Caco-2 (cell line): ENCODE measurements at regions of chr6 and their contacts with region 1.

Region 1: DNA sequence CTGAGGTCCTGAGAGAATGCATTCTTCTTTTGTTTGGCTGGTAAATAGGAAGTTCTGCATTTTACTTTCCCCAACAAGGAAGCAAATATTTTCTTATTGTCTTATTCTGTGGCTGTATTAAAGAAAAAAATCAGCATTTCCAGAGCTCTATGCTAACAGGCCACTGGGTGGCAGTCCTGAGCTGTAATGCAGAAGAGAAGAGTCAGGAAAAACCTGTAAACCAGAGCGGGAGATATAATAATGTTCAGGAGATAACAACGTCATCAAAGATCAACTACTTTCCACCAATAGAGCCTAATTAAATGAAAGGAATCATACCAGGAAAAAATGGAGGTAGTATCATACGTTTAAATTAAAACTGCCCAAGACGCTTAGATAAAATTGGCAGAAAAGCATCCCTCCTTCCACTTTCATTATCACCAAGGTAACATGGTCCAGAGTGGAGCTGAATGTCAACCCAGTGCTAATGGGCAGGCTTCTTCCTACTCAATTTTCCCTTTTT is 55.6 kb upstream of the CARMIL1 start:
- DNase-seq: peak; percentile 43 to 68
- H3K4me3 ChIP-seq: no peak overlapping the region
- H3K4me3 Mint-ChIP-seq: peak overlapping the region; percentile 25
- H3K27ac Mint-ChIP-seq: no peak overlapping the region
- H3K4me1 ChIP-seq: no peaks in the 10 kb centered on the region
- H3K4me1 Mint-ChIP-seq: peaks cover 13% of the 10 kb centered on the region
- H3K27me3 ChIP-seq: no peaks in the 10 kb centered on the region
- H3K27me3 Mint-ChIP-seq: no peaks in the 10 kb centered on the region
- CTCF ChIP-seq: peak; percentile 57 to 83

Region 2: DNA sequence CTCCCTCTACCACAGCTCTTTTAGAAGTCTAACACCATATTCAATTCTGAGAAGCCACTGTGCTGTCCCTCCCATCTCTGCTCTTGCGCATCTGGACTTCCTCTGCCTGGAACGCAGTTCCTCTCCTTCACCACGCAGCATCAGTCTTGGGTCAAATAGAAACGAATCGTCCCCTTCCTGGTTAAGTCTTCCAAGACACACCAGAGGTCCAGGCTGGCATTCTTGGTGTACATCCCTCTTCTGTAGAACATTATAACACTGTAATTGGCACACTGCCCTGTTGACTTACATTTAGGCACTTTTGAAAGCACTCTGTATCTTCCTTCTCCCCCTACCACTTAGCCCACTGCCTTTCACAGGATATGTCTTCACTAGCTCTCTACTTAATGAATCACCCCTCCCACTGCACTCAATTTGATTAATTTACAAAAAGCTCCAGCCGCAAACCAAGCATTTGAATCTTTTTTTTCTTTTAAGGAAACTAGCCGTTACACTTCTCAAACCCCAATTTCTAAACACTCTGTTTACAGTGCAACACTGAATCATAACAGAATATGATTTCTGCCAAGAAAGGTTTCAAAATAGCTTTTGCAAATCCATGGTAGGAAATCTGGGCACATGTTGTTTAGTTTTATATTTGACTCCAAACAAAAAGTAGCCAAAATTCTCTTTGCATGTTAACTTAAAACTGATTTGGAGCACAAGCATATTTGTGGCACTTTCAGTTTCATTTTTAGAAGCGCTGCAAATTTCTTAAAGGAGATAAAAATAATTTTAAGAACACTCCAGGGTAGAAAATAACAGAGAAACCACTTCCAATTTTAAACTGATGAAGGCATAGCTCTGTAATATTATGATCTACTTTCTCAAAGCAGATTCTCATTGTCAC is 85.1 kb before region 1 on chr6:
- CTCF ChIA-PET with region 1: no interaction called
- POLR2A ChIA-PET with region 1: no interaction called
- intact Hi-C with region 1: no loop called
- DNase-seq: no peak
- H3K4me3 ChIP-seq: no peak overlapping the region
- H3K4me3 Mint-ChIP-seq: no peak overlapping the region
- H3K27ac Mint-ChIP-seq: no peak overlapping the region
- H3K4me1 ChIP-seq: no peaks in the 10 kb centered on the region
- H3K4me1 Mint-ChIP-seq: no peaks in the 10 kb centered on the region
- H3K27me3 ChIP-seq: no peaks in the 10 kb centered on the region
- H3K27me3 Mint-ChIP-seq: peaks cover 6% of the 10 kb centered on the region
- CTCF ChIP-seq: no peak

Region 3: DNA sequence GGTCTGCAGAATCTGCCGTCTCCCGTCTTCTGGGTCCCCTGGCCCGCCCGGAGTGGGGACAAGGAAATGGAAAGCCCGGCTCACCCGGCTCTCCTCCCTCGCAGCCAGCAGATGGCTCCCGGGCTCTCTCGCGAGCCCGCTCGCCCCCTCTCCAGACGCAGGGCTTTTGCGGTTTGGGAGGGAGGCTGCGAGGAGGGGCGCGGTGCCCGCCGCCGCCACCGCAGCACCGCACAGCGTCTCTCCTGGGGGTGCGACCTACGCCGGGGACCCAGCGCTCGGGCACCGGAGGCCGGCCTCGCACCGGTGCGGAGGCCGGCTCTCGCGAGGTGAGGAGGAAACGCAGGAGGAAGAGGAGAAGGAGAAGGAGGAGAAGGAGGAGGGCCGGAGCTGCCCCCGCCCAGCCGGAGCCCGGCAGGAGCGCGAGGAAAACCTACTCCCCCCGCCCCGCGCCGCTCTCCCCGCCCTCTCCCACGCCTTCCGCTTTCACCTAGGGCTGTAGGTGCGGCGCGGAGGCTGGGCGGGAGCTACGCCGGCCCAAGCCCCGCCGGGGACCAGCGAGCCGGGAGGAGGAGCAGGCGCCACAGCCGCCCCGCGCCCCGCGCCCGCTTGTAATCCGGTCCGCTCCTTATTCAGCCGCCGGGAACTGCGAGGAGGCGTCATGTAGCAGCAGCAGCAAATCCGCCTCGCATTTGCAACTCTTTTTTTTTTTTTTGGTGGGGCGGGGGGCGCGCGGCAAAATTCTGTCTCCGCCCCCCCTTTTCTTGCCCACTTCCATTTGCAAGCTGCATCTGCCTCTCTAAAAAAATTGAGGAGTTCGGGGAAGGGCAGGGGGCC is 55.6 kb after region 1 on chr6 and contains the start of gene CARMIL1:
- CTCF ChIA-PET with region 1: interaction called, 3 read pairs
- POLR2A ChIA-PET with region 1: no interaction called
- intact Hi-C with region 1: loop called (anchors 2 kb)
- DNase-seq: peak; percentile 91 to 93
- H3K4me3 ChIP-seq: peak within 1 kb of the TSS; percentile 95
- H3K4me3 Mint-ChIP-seq: peak within 1 kb of the TSS; percentile 95
- H3K27ac Mint-ChIP-seq: peak within 1 kb of the TSS; percentile 87
- H3K4me1 ChIP-seq: peaks cover 8% of the 10 kb centered on the region
- H3K4me1 Mint-ChIP-seq: peaks cover 33% of the 10 kb centered on the region
- H3K27me3 ChIP-seq: no peaks in the 10 kb centered on the region
- H3K27me3 Mint-ChIP-seq: no peaks in the 10 kb centered on the region
- CTCF ChIP-seq: peak; percentile 53 to 88
- total RNA-seq, gene CARMIL1: 25.9 and 26.5 TPM in 2 replicates

Region 4: GRCh38 chr6:25556516-25556915 is 333.0 kb after region 1 on chr6:
- CTCF ChIA-PET with region 1: interaction called, 10 read pairs
- POLR2A ChIA-PET with region 1: no interaction called
- intact Hi-C with region 1: loop called (anchors 1 kb)
- DNase-seq: peak; percentile 67 to 79
- H3K4me3 ChIP-seq: no peak overlapping the region
- H3K4me3 Mint-ChIP-seq: no peak overlapping the region
- H3K27ac Mint-ChIP-seq: no peak overlapping the region
- H3K4me1 ChIP-seq: no peaks in the 10 kb centered on the region
- H3K4me1 Mint-ChIP-seq: no peaks in the 10 kb centered on the region
- H3K27me3 ChIP-seq: no peaks in the 10 kb centered on the region
- H3K27me3 Mint-ChIP-seq: no peaks in the 10 kb centered on the region
- CTCF ChIP-seq: peak; percentile 79

Region 5: DNA sequence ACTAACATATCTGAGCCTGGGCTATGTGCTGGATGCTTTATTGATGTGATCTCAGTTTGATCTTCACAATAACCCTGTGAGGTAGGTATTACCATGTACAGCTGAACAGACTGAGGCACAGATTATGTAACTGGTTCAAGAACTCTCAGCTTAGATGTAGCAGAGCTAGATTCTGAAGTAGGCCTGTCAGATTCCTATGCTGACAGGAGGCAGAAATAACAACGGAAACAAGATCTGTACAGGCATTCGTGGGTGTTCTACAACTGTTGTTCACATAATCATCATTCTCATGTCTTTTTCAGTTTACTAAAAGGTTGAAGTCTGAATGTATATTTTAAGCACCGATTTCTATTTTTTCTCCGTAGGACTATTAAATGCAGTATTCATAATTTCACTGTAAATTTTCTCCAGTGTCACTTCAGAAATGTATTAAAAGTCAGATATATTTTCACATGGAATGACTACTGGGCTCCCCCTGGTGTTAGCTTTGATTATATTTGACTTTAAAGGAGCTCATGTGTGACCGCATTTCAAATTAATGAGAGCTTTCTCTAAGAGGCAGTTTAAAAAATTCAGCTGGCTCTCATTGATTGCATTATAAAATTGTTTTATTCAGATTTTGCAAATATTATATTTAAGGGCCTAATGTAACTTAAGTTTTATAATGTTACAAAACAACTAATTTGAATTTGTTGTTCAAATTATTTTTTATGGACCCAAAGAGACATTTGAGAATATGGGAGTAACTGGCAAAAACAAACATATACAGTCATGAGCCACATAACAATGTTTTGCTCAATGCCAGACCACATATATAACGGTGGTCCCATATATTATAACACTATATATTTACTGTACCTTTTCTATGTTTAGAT is 494.6 kb after region 1 on chr6:
- CTCF ChIA-PET with region 1: interaction called, 18 read pairs
- POLR2A ChIA-PET with region 1: no interaction called
- intact Hi-C with region 1: loop called (anchors 1 kb)
- DNase-seq: peak in 1 of 2 experiments; percentile 47
- H3K4me3 ChIP-seq: no peak overlapping the region
- H3K4me3 Mint-ChIP-seq: no peak overlapping the region
- H3K27ac Mint-ChIP-seq: no peak overlapping the region
- H3K4me1 ChIP-seq: no peaks in the 10 kb centered on the region
- H3K4me1 Mint-ChIP-seq: no peaks in the 10 kb centered on the region
- H3K27me3 ChIP-seq: no peaks in the 10 kb centered on the region
- H3K27me3 Mint-ChIP-seq: no peaks in the 10 kb centered on the region
- CTCF ChIP-seq: peak; percentile 50 to 58

Region 6: GRCh38 chr6:25746968-25747367 is 523.4 kb after region 1 on chr6:
- CTCF ChIA-PET with region 1: no interaction called
- POLR2A ChIA-PET with region 1: no interaction called
- intact Hi-C with region 1: no loop called
- DNase-seq: no peak
- H3K4me3 ChIP-seq: no peak overlapping the region
- H3K4me3 Mint-ChIP-seq: no peak overlapping the region
- H3K27ac Mint-ChIP-seq: no peak overlapping the region
- H3K4me1 ChIP-seq: peaks cover 27% of the 10 kb centered on the region
- H3K4me1 Mint-ChIP-seq: peaks cover 7% of the 10 kb centered on the region
- H3K27me3 ChIP-seq: no peaks in the 10 kb centered on the region
- H3K27me3 Mint-ChIP-seq: no peaks in the 10 kb centered on the region
- CTCF ChIP-seq: no peak

Region 7: GRCh38 chr6:25942561-25943147 is 719.1 kb after region 1 on chr6:
- CTCF ChIA-PET with region 1: no interaction called
- POLR2A ChIA-PET with region 1: no interaction called
- intact Hi-C with region 1: loop called (anchors 5 kb)
- DNase-seq: peak in 1 of 2 experiments; percentile 37
- H3K4me3 ChIP-seq: no peak overlapping the region
- H3K4me3 Mint-ChIP-seq: no peak overlapping the region
- H3K27ac Mint-ChIP-seq: no peak overlapping the region
- H3K4me1 ChIP-seq: peaks cover 11% of the 10 kb centered on the region; the same call in 1 of the 2 replicates
- H3K4me1 Mint-ChIP-seq: peaks cover 11% of the 10 kb centered on the region
- H3K27me3 ChIP-seq: no peaks in the 10 kb centered on the region
- H3K27me3 Mint-ChIP-seq: no peaks in the 10 kb centered on the region
- CTCF ChIP-seq: peak; percentile 47 to 65

Region 8: DNA sequence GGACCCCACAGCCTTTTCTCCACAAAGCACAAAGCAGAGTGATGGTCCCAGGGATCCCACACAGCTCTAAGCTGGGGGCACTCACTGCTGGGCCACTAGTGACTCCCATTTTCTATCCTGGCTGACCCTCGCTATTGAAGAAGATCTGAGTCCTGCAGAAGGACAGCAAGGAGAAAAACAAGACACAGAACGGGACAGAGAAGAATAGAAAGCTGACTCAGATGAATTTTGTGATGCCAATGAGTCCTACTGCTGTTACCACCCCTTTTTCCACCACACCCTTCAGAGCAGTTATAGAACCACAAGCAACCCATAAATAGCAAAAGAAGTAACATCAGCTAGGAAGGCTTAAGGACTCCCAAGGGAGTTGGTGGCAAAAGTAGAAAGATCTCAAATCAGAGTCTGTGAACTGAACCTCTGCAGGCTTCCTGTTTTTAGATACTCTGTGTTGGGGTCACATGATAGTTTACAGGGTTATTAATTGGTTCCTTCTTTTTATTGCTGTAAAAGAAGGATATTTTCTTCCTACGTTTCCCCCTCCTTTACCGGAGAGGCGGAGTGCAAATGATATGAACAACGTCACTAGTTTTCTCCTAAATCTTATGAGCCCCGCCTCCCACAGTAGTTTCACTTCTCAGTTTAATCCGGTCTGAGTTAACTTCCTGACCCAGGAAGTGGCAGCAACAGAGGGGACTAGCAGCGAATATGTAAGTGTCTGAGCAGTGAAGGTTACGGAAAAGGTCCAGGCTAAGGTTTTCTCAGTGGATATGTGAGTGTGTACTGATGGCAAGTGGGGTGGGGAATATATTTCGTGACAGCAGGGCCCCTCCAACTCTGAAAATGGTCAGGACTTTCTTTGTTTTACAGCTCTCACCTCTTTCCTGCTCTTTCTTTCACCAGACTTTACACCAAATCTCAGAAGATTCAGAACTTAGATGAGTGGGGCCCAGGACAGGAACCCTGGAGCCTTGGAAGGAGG is 738.9 kb after region 1 on chr6 and contains the start of gene TRIM38:
- CTCF ChIA-PET with region 1: no interaction called
- POLR2A ChIA-PET with region 1: no interaction called
- intact Hi-C with region 1: no loop called
- DNase-seq: no peak
- H3K4me3 ChIP-seq: no peak within 1 kb of the TSS
- H3K4me3 Mint-ChIP-seq: peak within 1 kb of the TSS; percentile 64
- H3K27ac Mint-ChIP-seq: peak within 1 kb of the TSS; percentile 26
- H3K4me1 ChIP-seq: peaks cover 5% of the 10 kb centered on the region; the same call in 1 of the 2 replicates
- H3K4me1 Mint-ChIP-seq: peaks cover 17% of the 10 kb centered on the region
- H3K27me3 ChIP-seq: no peaks in the 10 kb centered on the region
- H3K27me3 Mint-ChIP-seq: no peaks in the 10 kb centered on the region
- CTCF ChIP-seq: no peak
- total RNA-seq, gene TRIM38: 0.53 and 0.70 TPM in 2 replicates